ENCODE measurements at regions of chr15 and their contacts with region 1.

Region 1: DNA sequence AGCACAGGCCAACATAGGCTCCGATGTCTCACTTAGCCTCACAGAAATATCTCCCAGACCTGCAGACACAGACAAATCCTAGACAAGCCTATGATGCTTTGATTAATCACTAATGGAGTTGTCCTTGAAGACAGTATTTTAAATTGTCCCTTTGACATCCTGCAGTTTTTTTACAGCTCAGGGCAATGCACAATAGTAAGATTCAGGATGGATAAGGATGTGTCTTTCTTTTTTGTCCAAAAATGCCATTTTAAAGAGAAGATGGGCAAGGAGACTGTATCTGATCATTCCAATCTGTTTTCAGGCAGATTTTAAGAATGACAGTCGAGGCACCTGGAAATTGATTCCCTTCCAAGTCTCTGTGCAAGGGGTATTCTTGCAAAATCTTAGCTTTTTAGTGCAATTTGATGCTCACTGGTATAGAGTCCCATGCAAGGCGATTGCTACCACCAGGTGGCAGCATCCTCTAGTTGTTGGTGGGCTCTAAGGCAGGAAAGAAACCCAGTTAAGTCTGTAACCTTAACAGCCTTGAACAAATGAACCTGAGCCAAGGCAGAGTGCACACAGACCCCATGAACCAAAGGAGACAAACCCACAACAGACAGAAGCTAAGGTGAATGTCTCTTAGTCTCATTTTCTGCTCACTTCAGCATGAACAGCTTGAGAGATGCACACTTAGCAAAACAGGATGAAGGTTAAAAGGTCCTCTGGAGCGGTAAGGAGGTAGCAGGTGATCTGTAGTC is 51.2 kb upstream of the MINAR1 start:
- DNase-seq: peak; percentile 85
- ATAC-seq: peak; percentile 99
- H3K4me3 Mint-ChIP-seq: no peak overlapping the region
- H3K27ac Mint-ChIP-seq: no peak overlapping the region
- H3K4me1 Mint-ChIP-seq: no peaks in the 10 kb centered on the region; the same call in 1 of the 2 replicates
- H3K27me3 Mint-ChIP-seq: no peaks in the 10 kb centered on the region
- CTCF ChIP-seq: peak; percentile 85

Region 2: DNA sequence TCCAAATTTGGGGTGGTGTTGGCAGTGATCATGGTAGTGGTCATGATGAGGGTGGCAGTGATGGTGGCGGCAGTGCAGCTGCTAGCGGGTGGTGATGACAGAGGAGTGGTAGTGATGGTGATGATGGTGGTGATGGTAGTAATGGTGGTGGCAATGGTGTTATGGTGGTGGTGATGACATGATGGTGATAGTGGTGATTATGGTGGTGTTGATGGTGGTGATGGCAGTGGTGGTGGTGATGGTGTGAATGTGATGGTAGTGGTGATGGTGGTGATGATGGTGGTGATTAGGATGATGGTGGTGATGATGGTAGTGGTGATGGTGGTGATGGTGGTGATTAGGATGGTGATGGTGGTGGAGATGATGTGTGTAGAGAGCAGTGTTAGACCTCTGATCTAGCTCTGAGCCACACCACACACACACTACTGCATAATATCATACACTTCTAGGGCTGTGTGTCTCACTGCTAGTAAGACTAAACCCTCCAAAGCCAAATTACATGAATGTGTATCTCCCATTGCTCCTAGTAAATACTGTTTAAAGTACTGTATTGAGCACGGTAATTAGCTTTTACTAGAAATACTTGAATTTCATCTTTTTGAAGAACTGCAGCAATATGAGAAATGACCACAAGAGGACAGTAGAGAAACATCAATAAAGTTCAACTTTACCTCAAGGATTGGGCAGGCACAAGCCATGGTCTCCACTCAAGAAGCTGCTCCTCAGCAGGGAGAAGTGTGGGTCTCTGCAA is 41.2 kb before region 1 on chr15:
- CTCF ChIA-PET with region 1: interaction called, 39 read pairs
- POLR2A ChIA-PET with region 1: no interaction called
- DNase-seq: no peak
- ATAC-seq: peak; percentile 53; the same call in 1 of the 2 replicates
- H3K4me3 Mint-ChIP-seq: no peak overlapping the region
- H3K27ac Mint-ChIP-seq: no peak overlapping the region
- H3K4me1 Mint-ChIP-seq: 0 out of 2 replicates have a peak, but pooled peaks cover 3% of the 10 kb centered on the region
- H3K27me3 Mint-ChIP-seq: no peaks in the 10 kb centered on the region
- CTCF ChIP-seq: peak; percentile 68

Region 3: DNA sequence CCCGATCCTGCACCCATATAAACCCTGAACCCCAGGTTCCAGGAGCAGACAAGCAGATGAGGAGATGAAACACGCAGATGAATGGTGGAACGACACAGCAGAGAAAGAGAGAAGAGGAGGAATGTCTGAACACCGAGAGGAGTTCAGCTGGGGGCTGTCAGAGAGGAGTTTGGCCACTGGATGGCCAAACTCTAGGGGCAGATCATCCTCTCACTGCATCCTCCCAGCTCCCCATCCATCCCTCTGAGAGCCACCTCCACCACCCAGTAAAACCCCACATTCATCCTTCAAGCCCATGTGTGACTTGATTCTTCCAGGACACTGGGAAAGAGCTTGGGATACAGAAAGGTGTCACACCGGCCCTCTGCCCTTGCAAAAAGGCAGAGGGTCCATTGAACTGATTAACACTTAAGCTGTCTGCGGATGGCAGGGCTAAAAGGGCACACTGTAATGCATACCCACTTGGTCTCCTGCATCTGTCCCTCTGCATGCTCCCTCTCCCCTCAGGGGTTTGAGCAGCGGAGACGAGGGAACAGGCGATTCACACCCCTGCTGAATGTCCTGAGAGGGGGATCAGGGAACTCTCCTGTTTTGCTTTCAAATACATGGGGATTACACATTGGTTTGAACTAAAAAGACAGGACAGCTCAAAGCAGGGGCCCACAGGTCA is 16.2 kb before region 1 on chr15:
- CTCF ChIA-PET with region 1: interaction called, 23 read pairs
- POLR2A ChIA-PET with region 1: interaction called, 4 read pairs
- DNase-seq: no peak
- ATAC-seq: no peak
- H3K4me3 Mint-ChIP-seq: no peak overlapping the region
- H3K27ac Mint-ChIP-seq: no peak overlapping the region
- H3K4me1 Mint-ChIP-seq: peaks cover 30% of the 10 kb centered on the region
- H3K27me3 Mint-ChIP-seq: no peaks in the 10 kb centered on the region
- CTCF ChIP-seq: no peak

Region 4: DNA sequence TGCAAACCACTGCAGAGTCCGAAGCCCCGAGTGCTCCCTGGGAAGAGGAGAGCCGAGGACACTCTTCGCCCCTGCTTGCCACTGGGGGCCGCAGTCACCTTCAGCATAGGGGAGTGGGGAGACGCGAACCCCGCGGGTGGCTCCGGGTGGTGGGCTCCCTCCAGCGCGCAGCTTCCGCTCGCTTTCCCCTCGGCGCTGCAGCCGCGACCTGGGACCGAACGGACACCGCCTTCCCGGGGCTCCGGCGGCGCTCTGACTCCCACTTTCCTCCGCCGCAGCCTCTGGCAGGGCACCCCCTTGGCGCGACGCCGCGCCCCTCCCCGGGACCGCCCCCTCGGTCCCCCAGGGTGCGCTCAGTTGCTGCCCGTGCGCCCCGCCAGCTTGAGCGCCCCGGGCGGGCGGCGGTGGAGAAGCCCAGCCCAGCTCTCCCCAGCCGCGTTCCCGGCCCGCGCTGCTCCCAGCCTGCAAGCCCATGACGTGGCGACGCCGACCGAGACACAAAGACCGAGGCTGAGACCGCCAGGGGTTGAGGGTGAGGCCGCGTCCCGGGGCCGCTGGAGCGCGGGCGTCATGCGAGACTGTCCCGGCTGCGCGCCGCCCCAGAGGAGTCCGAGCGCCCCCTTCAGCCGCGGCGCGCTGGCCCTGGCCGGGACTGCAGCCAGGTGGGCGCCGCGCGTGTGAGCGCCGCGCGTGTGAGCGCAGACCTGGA is 50.9 kb after region 1 on chr15 and contains the start of gene MINAR1:
- CTCF ChIA-PET with region 1: interaction called, 16 read pairs
- POLR2A ChIA-PET with region 1: no interaction called
- DNase-seq: peak; percentile 47
- ATAC-seq: peak; percentile 56
- H3K4me3 Mint-ChIP-seq: peak within 1 kb of the TSS; percentile 82
- H3K27ac Mint-ChIP-seq: no peak within 1 kb of the TSS
- H3K4me1 Mint-ChIP-seq: peaks cover 45% of the 10 kb centered on the region
- H3K27me3 Mint-ChIP-seq: peaks cover 77% of the 10 kb centered on the region
- CTCF ChIP-seq: no peak
- total RNA-seq, gene MINAR1: 0.78 to 1.4 TPM (median 0.80 TPM) in 3 replicates

Region 5: GRCh38 chr15:79853458-79854328 is 472.8 kb after region 1 on chr15:
- CTCF ChIA-PET with region 1: interaction called, 14 read pairs
- POLR2A ChIA-PET with region 1: no interaction called
- DNase-seq: peak; percentile 72
- ATAC-seq: peak; percentile 98
- H3K4me3 Mint-ChIP-seq: no peak overlapping the region
- H3K27ac Mint-ChIP-seq: peak overlapping the region; percentile 63
- H3K4me1 Mint-ChIP-seq: peaks cover 5% of the 10 kb centered on the region
- H3K27me3 Mint-ChIP-seq: no peaks in the 10 kb centered on the region
- CTCF ChIP-seq: peak; percentile 83